Head of caudate nucleus (tissue), 42 donors: ENCODE measurements at regions of chr12 and their contacts with region 1.

Region 1: DNA sequence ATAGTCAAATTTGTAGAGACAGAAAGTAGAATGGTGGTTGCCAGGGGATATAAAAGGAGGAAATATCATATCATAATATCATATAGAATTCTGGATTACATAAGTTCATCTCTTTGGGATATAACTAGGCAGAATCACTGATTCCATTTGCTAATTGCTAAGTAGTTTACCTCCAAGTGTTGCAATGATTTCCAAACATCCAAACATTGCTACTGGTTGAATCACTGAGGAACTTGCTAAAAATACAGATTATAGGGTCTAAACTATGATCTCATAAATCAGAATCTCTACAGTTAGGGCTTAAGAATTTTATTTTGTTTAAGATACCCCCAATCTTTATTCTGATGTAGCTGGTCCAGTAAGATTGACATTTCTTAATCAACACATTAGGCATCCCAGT is 16.1 kb upstream of the TAS2R42 start:
- DNase-seq: no peak

Region 2: DNA sequence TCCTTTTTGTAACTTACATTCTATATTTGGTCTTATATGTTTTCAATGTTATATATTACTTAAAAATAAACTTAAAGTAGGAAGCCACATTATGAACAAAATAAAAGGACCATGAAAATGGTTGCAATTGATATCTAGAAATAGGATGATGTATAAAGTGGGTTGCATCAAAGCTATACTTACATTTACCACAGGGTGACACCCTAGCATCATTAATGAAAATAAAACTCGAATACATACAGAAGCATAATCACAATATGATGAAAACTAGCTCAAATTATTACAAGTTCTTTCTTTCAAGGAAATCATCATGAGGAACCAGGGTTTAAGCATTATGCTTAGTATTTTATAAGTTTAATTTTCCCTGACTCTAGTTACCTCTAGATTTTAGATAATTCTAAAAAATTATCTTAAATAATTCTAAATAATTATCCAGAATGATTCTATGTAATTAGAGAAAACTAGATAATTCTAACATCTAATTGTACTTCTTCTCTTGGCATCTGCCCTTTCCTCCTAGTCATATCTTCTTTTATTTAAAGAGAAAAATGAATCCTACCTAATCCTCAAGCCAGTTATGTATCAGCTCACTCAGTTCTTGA is 431.6 kb before region 1 on chr12:
- intact Hi-C with region 1: loop called (anchors 10 kb)
- DNase-seq: peak in 1 of 42 donors; percentile 17

Region 3: DNA sequence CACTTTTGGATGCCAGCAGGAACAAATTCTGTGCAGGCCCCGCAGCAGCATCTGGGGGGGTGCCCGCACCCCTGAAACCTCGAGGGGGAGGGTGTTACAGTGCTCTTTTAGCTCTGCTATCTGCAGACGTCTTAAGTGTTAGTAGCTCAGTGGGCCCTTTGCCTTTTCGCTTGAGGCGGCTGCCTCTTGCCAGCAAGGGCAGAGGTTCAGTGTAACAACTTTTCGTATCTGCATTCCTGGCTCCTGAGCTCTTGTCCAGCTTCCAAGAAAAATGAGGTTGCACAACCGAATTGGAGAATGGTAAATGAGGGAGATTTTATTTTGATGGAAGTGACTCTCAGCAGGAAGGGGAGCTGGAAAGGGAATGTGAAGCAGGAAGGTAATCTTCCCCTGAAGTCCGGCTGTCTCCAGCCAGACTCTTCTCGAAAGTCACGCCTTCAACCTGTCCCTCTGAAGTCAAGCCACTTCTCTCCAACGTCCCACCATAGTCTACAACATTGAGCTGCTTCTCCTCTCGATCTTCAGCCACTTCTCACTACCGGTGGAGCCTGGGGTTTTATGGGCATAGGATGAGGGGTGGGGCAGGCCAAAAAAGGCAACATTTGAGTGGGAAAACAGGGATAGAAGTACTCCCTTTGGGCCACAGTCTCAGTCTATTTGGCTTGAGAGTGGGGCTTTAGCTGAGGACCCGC is 233.9 kb before region 1 on chr12:
- intact Hi-C with region 1: loop called (anchors 10 kb)
- DNase-seq: no peak

Region 4: DNA sequence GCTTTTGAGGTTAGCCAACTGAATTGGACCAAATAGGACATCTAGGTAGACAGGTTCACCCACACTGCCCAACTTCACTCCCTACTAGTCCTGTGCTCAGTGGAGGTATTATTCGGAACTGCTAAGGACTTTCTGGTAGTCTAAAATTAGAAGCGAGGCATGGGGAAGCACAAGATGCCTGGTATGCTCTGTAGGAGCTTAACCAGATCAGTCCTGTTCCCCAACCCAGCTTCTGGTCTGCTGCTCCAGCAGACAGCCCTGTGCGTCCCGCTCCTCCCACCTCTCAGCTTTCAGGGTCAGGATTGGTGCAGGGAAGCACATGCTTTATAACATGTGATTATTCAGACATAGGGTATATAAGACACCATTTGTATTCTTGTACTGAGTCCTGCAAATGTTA is 35.5 kb after region 1 on chr12:
- intact Hi-C with region 1: no loop called
- DNase-seq: no peak

Region 5: GRCh38 chr12:12091977-12092663 is 889.3 kb after region 1 on chr12:
- intact Hi-C with region 1: no loop called
- DNase-seq: peak in 1 of 42 donors; percentile 31